Uterus (tissue), 4 donors: ENCODE measurements at regions of chr9 and their contacts with region 1.

Region 1: DNA sequence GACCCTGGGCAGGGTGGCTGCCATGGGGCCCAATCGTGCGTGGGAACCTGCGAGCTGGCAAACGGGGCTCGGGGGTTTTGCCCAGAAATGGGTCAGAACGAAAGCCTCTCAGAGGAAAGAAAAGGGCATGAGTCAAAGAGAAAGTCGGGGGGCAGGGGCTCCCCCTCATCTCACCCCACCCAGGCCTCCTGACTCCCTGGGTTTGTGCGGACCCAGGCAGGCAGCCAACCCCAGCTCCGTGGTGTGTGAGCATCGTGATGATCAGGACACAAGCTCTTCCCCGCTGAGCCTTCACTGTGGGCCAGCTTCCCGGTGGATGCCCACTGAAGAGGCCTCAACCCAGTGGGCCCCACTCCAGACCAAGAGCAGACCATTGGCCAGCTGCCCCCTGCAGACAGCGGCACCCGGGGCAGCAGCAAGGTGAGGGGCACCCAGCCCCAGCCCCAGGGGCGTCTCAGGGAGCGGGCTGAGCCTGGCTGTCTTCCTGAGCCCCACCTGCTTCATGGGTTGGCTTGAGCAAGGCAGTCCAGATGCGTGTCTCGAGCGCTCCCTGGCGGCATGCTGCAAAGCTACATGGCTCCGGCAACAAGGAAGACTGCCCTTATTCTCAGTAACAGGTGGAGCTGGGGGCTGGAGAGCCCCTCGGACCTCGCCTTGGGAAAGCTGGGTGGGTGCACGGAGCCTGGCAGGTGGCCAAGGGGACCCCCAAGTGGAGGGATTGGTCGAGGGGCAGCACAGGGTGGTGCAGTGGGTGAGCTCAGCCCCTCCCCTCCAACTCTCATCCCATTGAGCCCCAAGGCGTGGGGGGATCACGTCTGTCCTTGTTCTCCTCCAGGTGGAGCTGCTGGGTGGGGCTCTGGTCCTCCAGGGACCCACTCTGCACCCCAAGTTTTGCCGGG is 3.2 kb upstream of the FUT7 start:
- DNase-seq: peak; percentile 76 to 78
- H3K4me3 ChIP-seq: no peak overlapping the region
- H3K27ac ChIP-seq: no peak overlapping the region
- H3K4me1 ChIP-seq: no peaks in the 10 kb centered on the region
- H3K27me3 ChIP-seq: no peaks in the 10 kb centered on the region
- CTCF ChIP-seq: peak; percentile 82 to 92 (median 88)
- POLR2A ChIP-seq: no peak

Region 2: GRCh38 chr9:136787690-136788400 is 247.3 kb before region 1 on chr9:
- intact Hi-C with region 1: loop called (anchors 5 kb)
- DNase-seq: peak; percentile 64 to 70
- H3K4me3 ChIP-seq: no peak overlapping the region
- H3K27ac ChIP-seq: no peak overlapping the region
- H3K4me1 ChIP-seq: peaks cover 3 to 8% of the 10 kb centered on the region in 2 donors
- H3K27me3 ChIP-seq: no peaks in the 10 kb centered on the region
- CTCF ChIP-seq: peak; percentile 83 to 91 (median 89)
- POLR2A ChIP-seq: no peak

Region 3: DNA sequence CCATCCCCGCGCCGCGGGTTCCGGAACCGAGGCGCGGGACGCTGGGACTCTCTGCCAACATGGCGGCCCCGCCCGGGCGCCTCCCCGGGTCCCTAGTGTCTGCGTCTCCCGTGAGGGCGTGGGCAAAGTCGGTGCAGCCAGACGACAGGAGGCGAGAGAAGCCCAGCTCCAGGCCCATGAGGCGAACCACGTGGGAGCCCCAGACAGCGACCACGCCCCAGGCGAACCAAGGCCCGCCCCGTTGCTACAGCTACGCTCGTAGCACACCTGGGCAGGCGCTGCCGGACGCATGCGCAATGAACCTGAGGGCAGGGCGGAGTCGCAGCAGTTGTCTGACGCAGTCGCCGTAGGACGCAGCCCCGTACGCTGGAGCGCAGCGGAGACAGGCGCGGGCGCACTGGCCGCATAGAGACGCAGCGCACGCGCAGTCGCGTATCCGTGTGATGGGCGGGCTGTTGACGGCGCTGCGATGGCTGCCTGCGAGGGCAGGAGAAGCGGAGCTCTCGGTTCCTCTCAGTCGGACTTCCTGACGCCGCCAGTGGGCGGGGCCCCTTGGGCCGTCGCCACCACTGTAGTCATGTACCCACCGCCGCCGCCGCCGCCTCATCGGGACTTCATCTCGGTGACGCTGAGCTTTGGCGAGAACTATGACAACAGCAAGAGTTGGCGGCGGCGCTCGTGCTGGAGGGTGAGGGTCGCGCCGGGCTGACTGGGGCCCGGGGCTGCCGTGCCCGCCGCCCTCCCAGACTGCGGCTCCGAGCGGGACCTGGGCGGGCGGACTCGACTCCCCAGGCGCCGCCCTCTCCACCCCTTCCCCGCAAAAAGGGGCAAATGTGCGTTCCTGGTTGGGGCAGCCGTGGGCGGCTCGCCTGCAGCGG is 51.7 kb after region 1 on chr9 and contains the start of gene MAN1B1:
- intact Hi-C with region 1: no loop called
- DNase-seq: peak; percentile 98
- H3K4me3 ChIP-seq: peak within 1 kb of the TSS; percentile 35 to 67
- H3K27ac ChIP-seq: peak within 1 kb of the TSS; percentile 74 to 82
- H3K4me1 ChIP-seq: peaks cover 0 to 5% of the 10 kb centered on the region in 2 donors
- H3K27me3 ChIP-seq: no peaks in the 10 kb centered on the region
- CTCF ChIP-seq: peak in 1 of 4 experiments; percentile 39
- POLR2A ChIP-seq: peak; percentile 79 to 86
- total RNA-seq, gene MAN1B1: 32.9 to 65.0 (median 47.5) TPM